ENCODE measurements at regions of chr11 and their contacts with region 1.

Region 1: GRCh38 chr11:69642913-69643632 is 2.1 kb downstream of the CCND1 start:
- DNase-seq: no peak
- H3K4me3 ChIP-seq: peak overlapping the region; percentile 81 to 85 (median 83)
- H3K27ac ChIP-seq: peak overlapping the region; percentile 84 to 93 (median 87)
- H3K4me1 ChIP-seq: peaks cover 28 to 84% (median 43%) of the 10 kb centered on the region in 3 donors
- H3K27me3 ChIP-seq: peaks cover 0 to 38% (median 0%) of the 10 kb centered on the region in 4 donors
- CTCF ChIP-seq: peak; percentile 83 to 97 (median 94)
- POLR2A ChIP-seq: peak in 1 of 4 donors; percentile 26

Region 2: GRCh38 chr11:69101115-69101791 is 541.8 kb before region 1 on chr11:
- intact Hi-C with region 1: loop called (anchors 5 kb)
- DNase-seq: no peak
- H3K4me3 ChIP-seq: no peak overlapping the region
- H3K27ac ChIP-seq: no peak overlapping the region
- H3K4me1 ChIP-seq: peaks cover 0 to 24% (median 6%) of the 10 kb centered on the region in 3 donors
- H3K27me3 ChIP-seq: peaks cover 0 to 14% (median 0%) of the 10 kb centered on the region in 4 donors
- CTCF ChIP-seq: peak; percentile 94 to 100 (median 98)
- POLR2A ChIP-seq: no peak

Region 3: GRCh38 chr11:69292221-69292648 is 350.8 kb before region 1 on chr11:
- intact Hi-C with region 1: loop called (anchors 5 kb)
- DNase-seq: no peak
- H3K4me3 ChIP-seq: no peak overlapping the region
- H3K27ac ChIP-seq: no peak overlapping the region
- H3K4me1 ChIP-seq: peaks cover 23 to 68% (median 30%) of the 10 kb centered on the region in 3 donors
- H3K27me3 ChIP-seq: no peaks in the 10 kb centered on the region
- CTCF ChIP-seq: peak; percentile 55 to 74 (median 66)
- POLR2A ChIP-seq: no peak

Measured in esophagus squamous epithelium (tissue), 5 donors.